ENCODE measurements at regions of chr17 and their contacts with region 1.

Region 1: GRCh38 chr17:29579866-29580771 is 9.3 kb downstream of the GIT1 start:
- DNase-seq: peak; percentile 80 to 95 (median 86)
- H3K4me3 ChIP-seq: no peak overlapping the region
- H3K27ac ChIP-seq: no peak overlapping the region
- H3K4me1 ChIP-seq: no peaks in the 10 kb centered on the region
- H3K27me3 ChIP-seq: no peaks in the 10 kb centered on the region
- CTCF ChIP-seq: peak; percentile 80 to 94 (median 92)
- POLR2A ChIP-seq: no peak

Region 2: GRCh38 chr17:29444589-29444988 is 135.5 kb before region 1 on chr17:
- intact Hi-C with region 1: no loop called
- DNase-seq: no peak
- H3K4me3 ChIP-seq: no peak overlapping the region
- H3K27ac ChIP-seq: peak overlapping the region in 1 of 5 donors; percentile 0
- H3K4me1 ChIP-seq: peaks cover 10 to 32% of the 10 kb centered on the region in 2 donors
- H3K27me3 ChIP-seq: no peaks in the 10 kb centered on the region
- CTCF ChIP-seq: no peak
- POLR2A ChIP-seq: no peak

Region 3: DNA sequence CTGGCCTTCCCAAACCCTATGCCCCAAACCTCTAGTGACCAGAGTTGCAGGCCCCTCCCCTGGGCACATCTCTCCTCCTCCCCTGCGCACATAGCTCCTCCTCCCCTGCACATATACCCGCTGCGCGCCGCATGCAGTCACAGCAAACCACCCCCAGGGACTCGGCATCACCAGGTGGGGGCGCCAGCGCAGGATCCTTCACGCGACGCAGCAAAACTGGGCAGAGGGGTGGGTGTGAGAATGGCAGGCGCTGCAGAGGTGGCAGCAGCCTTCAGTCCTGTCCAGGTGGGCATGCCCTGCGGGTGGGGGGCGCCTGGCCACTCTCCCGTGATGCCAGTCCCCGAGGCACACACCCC is 37.0 kb after region 1 on chr17:
- intact Hi-C with region 1: loop called (anchors 5 kb)
- DNase-seq: peak; percentile 71 to 86 (median 77)
- H3K4me3 ChIP-seq: peak overlapping the region in 1 of 4 donors; percentile 50
- H3K27ac ChIP-seq: no peak overlapping the region
- H3K4me1 ChIP-seq: peaks cover 27 to 57% of the 10 kb centered on the region in 2 donors
- H3K27me3 ChIP-seq: no peaks in the 10 kb centered on the region
- CTCF ChIP-seq: peak; percentile 33 to 66 (median 42)
- POLR2A ChIP-seq: no peak

Measured in adrenal gland (tissue), 19 donors.